Left colon (tissue), 2 donors: ENCODE measurements at regions of chr19 and their contacts with region 1.

Region 1: GRCh38 chr19:12669270-12670158 is 2.9 kb downstream of the WDR83 start:
- DNase-seq: peak; percentile 77 to 83
- ATAC-seq: peak; percentile 72

Region 2: GRCh38 chr19:12564016-12564664 is 105.4 kb before region 1 on chr19:
- intact Hi-C with region 1: loop called in 1 of 2 experiments (anchors 10 kb)
- DNase-seq: peak; percentile 75 to 93
- ATAC-seq: peak; percentile 95

Region 3: GRCh38 chr19:12596927-12597548 is 72.5 kb before region 1 on chr19:
- intact Hi-C with region 1: no loop called
- DNase-seq: no peak
- ATAC-seq: no peak